ENCODE measurements at regions of chr16 and their contacts with region 1.

Region 1: DNA sequence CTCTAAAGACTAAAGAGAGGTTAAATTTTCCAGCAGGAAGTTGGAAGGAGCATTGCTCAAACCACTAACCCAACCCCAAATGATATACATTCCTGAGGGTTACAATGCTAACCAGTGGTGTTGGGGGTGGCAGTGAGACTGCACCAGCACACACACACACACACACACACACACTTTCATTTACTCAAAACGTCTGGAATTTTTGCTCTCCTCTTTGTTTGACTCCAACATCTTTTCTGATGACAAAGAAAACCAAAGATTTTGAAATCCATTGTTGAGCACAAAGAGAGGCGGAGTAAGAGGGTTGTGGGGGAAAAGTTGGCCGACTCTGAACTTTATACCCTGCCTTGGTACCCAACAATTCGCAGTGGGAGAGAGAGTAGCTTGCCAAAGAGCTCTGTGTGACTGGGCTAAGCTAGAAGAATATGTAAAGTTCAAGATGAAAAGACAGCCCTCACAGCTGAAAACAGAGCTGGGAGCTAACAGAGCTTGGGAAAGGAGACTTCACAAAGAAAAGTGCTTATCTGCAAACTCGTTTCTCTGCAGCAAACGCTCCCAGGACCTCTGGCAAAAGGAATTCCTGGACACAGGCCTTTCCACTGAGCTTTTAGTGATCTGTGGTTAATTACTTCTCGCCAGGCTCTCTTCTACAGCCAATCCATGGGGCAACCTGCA is 426.0 kb upstream of the CDH11 start:
- DNase-seq: no peak
- H3K4me3 ChIP-seq: no peak overlapping the region
- H3K4me3 Mint-ChIP-seq: no peak overlapping the region
- H3K27ac Mint-ChIP-seq: no peak overlapping the region
- H3K4me1 ChIP-seq: no peaks in the 10 kb centered on the region
- H3K4me1 Mint-ChIP-seq: no peaks in the 10 kb centered on the region
- H3K27me3 ChIP-seq: no peaks in the 10 kb centered on the region
- H3K27me3 Mint-ChIP-seq: no peaks in the 10 kb centered on the region
- CTCF ChIP-seq: no peak

Region 2: GRCh38 chr16:65249768-65250167 is 298.1 kb before region 1 on chr16:
- CTCF ChIA-PET with region 1: no interaction called
- POLR2A ChIA-PET with region 1: no interaction called
- intact Hi-C with region 1: no loop called
- DNase-seq: no peak
- H3K4me3 ChIP-seq: no peak overlapping the region
- H3K4me3 Mint-ChIP-seq: no peak overlapping the region
- H3K27ac Mint-ChIP-seq: no peak overlapping the region
- H3K4me1 ChIP-seq: no peaks in the 10 kb centered on the region
- H3K4me1 Mint-ChIP-seq: no peaks in the 10 kb centered on the region
- H3K27me3 ChIP-seq: no peaks in the 10 kb centered on the region
- H3K27me3 Mint-ChIP-seq: no peaks in the 10 kb centered on the region
- CTCF ChIP-seq: no peak

Region 3: DNA sequence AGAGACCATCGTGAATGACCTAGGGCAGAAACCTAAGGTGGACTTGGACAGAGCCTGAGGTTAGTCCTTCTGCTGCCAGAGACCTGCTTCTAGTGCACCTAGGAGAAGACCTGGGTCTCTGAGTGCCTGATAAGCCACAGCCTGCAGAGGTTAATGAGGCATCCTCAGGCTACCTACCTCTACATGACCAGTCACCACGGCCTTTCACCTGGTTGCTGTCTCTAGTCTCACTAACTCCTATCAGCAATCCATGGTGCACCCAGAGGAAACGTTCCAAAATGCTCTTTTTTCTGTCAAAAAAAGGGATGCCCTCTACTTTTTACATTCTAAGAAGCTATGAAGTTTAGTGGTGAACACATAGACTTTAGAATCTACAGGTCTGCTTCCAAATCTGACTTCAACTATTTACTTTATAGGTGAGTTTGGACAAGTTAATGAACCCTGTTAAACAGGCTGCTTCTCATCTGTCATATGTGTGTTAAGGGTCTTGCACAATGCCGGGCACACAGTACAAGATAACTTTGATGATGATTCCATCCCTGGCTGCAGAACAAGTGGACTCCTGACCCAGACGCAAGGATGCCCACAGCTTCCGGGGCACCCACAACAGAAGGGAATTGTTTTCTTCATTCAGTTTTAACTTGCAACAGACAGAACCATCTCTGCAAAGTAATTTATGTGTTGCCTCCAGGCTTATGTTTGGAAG is 348.7 kb after region 1 on chr16:
- CTCF ChIA-PET with region 1: no interaction called
- POLR2A ChIA-PET with region 1: interaction called, 10 read pairs
- intact Hi-C with region 1: no loop called
- DNase-seq: no peak
- H3K4me3 ChIP-seq: no peak overlapping the region
- H3K4me3 Mint-ChIP-seq: no peak overlapping the region
- H3K27ac Mint-ChIP-seq: no peak overlapping the region
- H3K4me1 ChIP-seq: no peaks in the 10 kb centered on the region
- H3K4me1 Mint-ChIP-seq: no peaks in the 10 kb centered on the region
- H3K27me3 ChIP-seq: no peaks in the 10 kb centered on the region
- H3K27me3 Mint-ChIP-seq: peaks cover 23% of the 10 kb centered on the region
- CTCF ChIP-seq: no peak

Measured in Caco-2 (cell line).